ENCODE measurements at regions of chr3 and their contacts with region 1.

Region 1: GRCh38 chr3:13824521-13825310 is 55.2 kb downstream of the WNT7A start:
- DNase-seq: peak; percentile 66

Region 2: GRCh38 chr3:13873818-13874217 is 49.1 kb after region 1 on chr3:
- intact Hi-C with region 1: loop called in 1 of 2 experiments (anchors 1 kb)
- DNase-seq: peak; percentile 56

Measured in posterior vena cava (tissue), 2 donors.